ENCODE measurements at regions of chr6 and their contacts with region 1.

Region 1: GRCh38 chr6:111997078-111997852 is 56.6 kb upstream of the CCN6 start:
- DNase-seq: peak; percentile 79 to 85 (median 83)
- H3K4me3 ChIP-seq: no peak overlapping the region
- H3K27ac ChIP-seq: peak overlapping the region in 1 of 2 donors; percentile 11
- H3K4me1 ChIP-seq: no peaks in the 10 kb centered on the region
- H3K27me3 ChIP-seq: no peaks in the 10 kb centered on the region
- CTCF ChIP-seq: peak; percentile 78 to 94 (median 85)
- EP300 ChIP-seq: no peak
- POLR2A ChIP-seq: no peak

Region 2: GRCh38 chr6:111709615-111710398 is 287.5 kb before region 1 on chr6:
- intact Hi-C with region 1: loop called (anchors 2 to 5 kb)
- DNase-seq: peak; percentile 69 to 85 (median 76)
- H3K4me3 ChIP-seq: no peak overlapping the region
- H3K27ac ChIP-seq: peak overlapping the region in 1 of 2 donors; percentile 60
- H3K4me1 ChIP-seq: peaks cover 10% of the 10 kb centered on the region
- H3K27me3 ChIP-seq: no peaks in the 10 kb centered on the region
- CTCF ChIP-seq: peak; percentile 51 to 90 (median 69)
- EP300 ChIP-seq: no peak
- POLR2A ChIP-seq: no peak